ENCODE measurements at regions of chr22 and their contacts with region 1.

Region 1: GRCh38 chr22:24525416-24526037 is 29.4 kb downstream of the GUCD1 start:
- DNase-seq: peak; percentile 77
- H3K4me3 ChIP-seq: no peak overlapping the region; a peak in 1 of 4 replicates
- H3K27ac ChIP-seq: no peak overlapping the region; a peak in 1 of 4 replicates
- H3K4me1 ChIP-seq: peaks cover 10 to 47% of the 10 kb centered on the region in 2 experiments; a peak in 2 of 4 replicates
- H3K27me3 ChIP-seq: no peaks in the 10 kb centered on the region
- CTCF ChIP-seq: peak; percentile 93
- EP300 ChIP-seq: no peak
- RAD21 ChIP-seq: peak; percentile 88

Region 2: DNA sequence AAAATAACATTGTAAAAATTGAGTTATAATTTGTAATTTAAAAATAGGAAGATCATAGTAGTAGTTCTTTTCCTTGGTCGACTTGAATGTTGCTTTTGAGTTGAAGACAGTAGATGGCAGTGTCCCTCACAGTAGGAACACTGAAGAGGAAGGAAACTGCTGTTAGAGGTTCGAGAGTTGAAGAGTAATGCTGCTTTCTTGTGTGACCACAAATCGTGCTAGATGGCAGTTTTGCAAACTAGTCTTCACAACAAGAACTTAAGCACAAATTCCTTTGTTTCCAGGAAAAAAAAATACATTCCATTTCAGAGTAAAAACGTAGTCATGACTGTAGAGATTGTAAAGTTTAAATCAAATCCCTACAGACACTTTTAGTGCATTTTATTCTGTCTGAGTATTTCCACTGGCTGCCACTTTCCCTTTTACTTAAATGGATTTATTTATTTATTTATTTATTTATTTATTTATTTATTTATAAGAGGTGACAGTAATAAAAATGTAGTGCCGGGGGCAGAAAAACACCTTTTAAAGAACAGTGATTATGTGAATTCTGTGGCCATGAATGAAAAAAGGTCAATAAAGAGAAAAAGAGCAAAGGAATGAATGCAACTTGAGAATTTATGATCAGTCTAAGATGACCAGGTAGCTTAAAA is 200.3 kb before region 1 on chr22:
- CTCF ChIA-PET with region 1: interaction called, 59 read pairs
- POLR2A ChIA-PET with region 1: interaction called, 3 read pairs
- DNase-seq: peak; percentile 42
- H3K4me3 ChIP-seq: no peak overlapping the region
- H3K27ac ChIP-seq: peak overlapping the region; percentile 80 to 97
- H3K4me1 ChIP-seq: peaks cover 19 to 45% of the 10 kb centered on the region in 2 experiments; a peak in 3 of 4 replicates
- H3K27me3 ChIP-seq: no peaks in the 10 kb centered on the region
- CTCF ChIP-seq: peak; percentile 80
- EP300 ChIP-seq: peak in 1 of 2 experiments; percentile 27; a peak in 1 of 4 replicates
- RAD21 ChIP-seq: peak; percentile 95

Region 3: DNA sequence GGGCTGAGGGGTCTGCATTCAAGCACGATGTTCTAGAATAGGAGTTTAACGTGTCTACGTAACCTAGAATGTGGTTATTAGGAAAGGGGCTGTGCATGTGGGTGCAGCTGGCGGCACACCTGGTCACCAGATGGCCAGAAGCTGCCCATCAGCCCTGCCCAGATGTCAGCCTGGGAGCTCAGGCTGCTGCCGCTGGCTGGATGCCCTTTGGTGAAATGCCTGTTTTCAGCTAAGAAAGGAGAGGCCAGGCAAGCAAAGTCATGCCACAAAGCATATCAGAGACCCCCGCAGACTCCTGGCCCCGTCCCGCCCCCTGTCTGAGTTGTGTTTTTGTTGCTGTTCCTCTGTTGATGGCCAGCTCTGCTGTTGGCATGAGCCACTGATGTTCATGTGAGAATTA is 109.4 kb before region 1 on chr22:
- CTCF ChIA-PET with region 1: interaction called, 12 read pairs
- POLR2A ChIA-PET with region 1: no interaction called
- DNase-seq: peak; percentile 93
- H3K4me3 ChIP-seq: no peak overlapping the region
- H3K27ac ChIP-seq: peak overlapping the region in 1 of 2 experiments; percentile 97; a peak in 2 of 4 replicates
- H3K4me1 ChIP-seq: peaks cover 0 to 65% of the 10 kb centered on the region in 2 experiments; a peak in 2 of 4 replicates
- H3K27me3 ChIP-seq: no peaks in the 10 kb centered on the region
- CTCF ChIP-seq: no peak
- EP300 ChIP-seq: no peak
- RAD21 ChIP-seq: peak; percentile 14; the same call in 1 of the 2 replicates

Measured in SK-N-SH (cell line).